ENCODE measurements at regions of chr17 and their contacts with region 1.

Region 1: DNA sequence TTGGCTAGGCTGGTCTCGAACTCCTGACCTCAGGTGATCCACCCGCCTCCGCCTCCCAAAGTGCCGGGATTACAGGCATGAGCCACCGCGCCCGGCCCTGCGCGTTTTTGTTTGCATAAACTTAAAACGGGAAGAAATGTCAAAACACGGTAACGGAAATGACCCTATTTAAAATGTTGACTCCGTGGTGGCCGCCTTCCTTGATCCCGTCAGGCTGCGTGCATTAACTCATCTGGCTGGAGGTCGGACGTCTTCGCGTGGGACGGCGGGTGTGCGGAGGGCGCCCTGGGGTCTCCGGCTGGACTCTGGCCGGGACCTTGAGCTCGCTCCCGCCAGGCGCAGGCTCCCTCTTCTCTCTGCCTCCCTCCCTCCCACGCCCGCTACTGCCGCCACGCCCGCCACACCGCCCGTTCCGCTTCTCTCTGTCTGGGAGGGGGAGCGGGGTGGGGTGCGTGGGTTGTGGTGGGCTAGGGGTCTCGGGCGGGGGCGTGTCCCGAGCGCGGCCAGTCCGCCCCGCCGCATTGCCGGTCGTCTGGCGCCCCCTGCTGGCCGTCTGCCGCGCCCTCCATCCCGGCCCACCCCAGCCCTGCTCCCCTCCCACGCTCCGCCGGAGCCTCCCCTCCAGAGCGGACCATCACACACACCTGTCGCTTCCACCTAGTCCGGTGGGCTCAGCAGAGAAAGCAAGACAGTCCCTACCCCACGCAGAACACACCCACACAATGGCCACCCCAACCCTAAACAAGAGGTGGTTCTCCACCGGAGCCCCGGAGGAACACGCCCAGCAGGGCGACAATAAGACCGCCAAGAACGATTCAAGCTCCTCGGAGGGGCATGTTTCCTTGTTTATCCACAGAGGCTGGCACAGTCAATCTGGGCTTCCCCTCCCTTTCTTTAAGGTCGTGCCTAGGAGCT is 1.2 kb upstream of the CCDC42 start:
- DNase-seq: peak; percentile 66
- H3K4me3 Mint-ChIP-seq: peak overlapping the region; percentile 74
- H3K27ac Mint-ChIP-seq: no peak overlapping the region
- H3K4me1 Mint-ChIP-seq: no peaks in the 10 kb centered on the region
- H3K27me3 Mint-ChIP-seq: peaks cover 47% of the 10 kb centered on the region
- CTCF ChIP-seq: peak; percentile 81

Region 2: DNA sequence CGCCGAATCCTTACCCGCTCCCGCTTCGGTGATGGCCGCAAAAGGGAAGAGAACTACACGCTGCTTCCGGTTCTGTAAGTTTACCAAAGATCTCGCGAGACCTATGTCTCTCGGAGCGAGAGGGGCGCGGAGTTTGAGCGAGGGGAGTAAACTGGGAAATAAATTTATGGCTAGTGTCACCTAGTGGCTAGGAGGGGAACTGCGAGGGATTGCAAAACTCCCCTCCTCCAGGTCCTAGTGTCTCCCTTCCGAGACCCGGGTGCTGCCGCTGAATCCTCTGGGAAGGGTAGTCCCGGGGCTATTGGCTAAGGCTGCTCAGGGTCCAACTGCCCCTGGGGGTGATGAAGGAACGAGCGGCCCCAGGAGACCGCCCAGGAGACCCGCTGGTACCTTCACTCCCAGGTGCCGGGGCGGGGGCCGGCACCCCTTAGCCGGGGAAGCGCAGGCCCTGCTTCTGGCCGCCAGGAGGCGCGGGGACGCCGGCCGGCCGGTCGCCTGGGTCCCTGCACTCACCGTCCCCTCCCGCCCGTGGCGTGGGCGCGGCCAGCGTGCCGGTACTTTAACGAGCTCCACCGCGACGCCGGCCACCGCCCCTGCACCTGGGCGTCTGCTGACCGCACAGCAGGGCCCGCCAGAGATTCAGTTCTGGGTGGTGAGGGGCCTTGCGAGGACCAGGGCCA is 362.6 kb before region 1 on chr17 and contains the start of gene RPL26:
- CTCF ChIA-PET with region 1: interaction called, 6 read pairs
- intact Hi-C with region 1: loop called (anchors 5 kb)
- DNase-seq: peak; percentile 89
- H3K4me3 Mint-ChIP-seq: peak within 1 kb of the TSS; percentile 89
- H3K27ac Mint-ChIP-seq: peak within 1 kb of the TSS; percentile 95
- H3K4me1 Mint-ChIP-seq: peaks cover 24% of the 10 kb centered on the region
- H3K27me3 Mint-ChIP-seq: no peaks in the 10 kb centered on the region
- CTCF ChIP-seq: peak; percentile 92
- total RNA-seq, gene RPL26: 739 and 842 TPM in 2 replicates

Region 3: DNA sequence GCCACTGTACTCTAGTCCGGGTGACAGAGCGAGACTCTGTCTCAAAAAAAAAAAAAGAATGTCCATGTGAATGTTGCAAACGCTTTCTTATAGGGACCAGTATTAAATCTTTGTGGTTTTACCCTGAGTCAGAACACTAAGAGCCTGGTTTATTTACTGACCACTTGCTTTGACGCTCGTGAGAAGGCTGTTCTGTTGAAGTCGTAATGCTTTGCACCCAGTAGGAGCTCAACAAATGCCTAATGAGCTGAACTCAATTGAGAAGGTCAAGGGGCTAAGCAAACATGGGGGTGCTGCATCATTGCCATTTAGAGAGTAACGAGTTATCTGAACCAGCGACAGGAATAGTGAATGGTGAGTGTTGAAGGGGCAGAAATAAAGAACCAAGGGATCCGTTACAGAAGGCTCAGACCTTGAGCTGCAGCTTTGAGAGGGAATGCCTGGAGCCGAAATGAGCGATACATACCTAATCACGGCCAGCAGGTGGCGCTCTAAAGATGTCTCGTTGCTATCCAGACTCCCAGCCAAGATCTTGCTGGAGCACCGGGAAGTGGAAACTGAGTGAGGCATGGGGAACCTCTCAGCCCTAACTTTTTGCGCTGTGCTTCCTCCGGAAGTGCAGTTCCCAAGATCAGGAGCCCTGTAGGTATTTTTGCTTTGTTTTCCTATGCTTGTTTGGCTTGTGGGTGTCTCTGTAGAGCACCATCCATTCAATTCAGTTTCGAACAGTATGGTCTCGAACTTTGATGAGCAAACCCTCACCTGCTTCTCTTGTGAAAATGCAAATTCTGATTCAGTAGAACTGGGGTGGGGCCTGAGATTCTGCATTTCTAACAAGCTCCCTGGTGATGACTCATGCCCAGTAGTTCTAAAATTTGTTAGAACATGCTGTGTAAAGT is 335.6 kb before region 1 on chr17:
- CTCF ChIA-PET with region 1: interaction called, 12 read pairs
- intact Hi-C with region 1: no loop called
- DNase-seq: peak; percentile 83
- H3K4me3 Mint-ChIP-seq: no peak overlapping the region
- H3K27ac Mint-ChIP-seq: no peak overlapping the region
- H3K4me1 Mint-ChIP-seq: peaks cover 8% of the 10 kb centered on the region
- H3K27me3 Mint-ChIP-seq: no peaks in the 10 kb centered on the region
- CTCF ChIP-seq: peak; percentile 53

Region 4: GRCh38 chr17:8455665-8456209 is 290.1 kb before region 1 on chr17:
- CTCF ChIA-PET with region 1: no interaction called
- intact Hi-C with region 1: no loop called
- DNase-seq: no peak
- H3K4me3 Mint-ChIP-seq: no peak overlapping the region
- H3K27ac Mint-ChIP-seq: no peak overlapping the region
- H3K4me1 Mint-ChIP-seq: no peaks in the 10 kb centered on the region
- H3K27me3 Mint-ChIP-seq: no peaks in the 10 kb centered on the region
- CTCF ChIP-seq: no peak

Region 5: GRCh38 chr17:8572764-8573163 is 173.1 kb before region 1 on chr17:
- CTCF ChIA-PET with region 1: no interaction called
- intact Hi-C with region 1: loop called (anchors 2 kb)
- DNase-seq: no peak
- H3K4me3 Mint-ChIP-seq: no peak overlapping the region
- H3K27ac Mint-ChIP-seq: no peak overlapping the region
- H3K4me1 Mint-ChIP-seq: no peaks in the 10 kb centered on the region
- H3K27me3 Mint-ChIP-seq: no peaks in the 10 kb centered on the region
- CTCF ChIP-seq: no peak

Region 6: GRCh38 chr17:8698162-8699061 is 47.4 kb before region 1 on chr17:
- CTCF ChIA-PET with region 1: no interaction called
- intact Hi-C with region 1: no loop called
- DNase-seq: no peak
- H3K4me3 Mint-ChIP-seq: peak overlapping the region; percentile 11
- H3K27ac Mint-ChIP-seq: no peak overlapping the region
- H3K4me1 Mint-ChIP-seq: peaks cover 7% of the 10 kb centered on the region
- H3K27me3 Mint-ChIP-seq: peaks cover 85% of the 10 kb centered on the region
- CTCF ChIP-seq: no peak

Measured in Calu3 (cell line).